Activated CD4-positive, alpha-beta T cell treated with anti-CD3 and anti-CD28 coated beads for 36 hours (primary cell): ENCODE measurements at regions of chr9 and their contacts with region 1.

Region 1: DNA sequence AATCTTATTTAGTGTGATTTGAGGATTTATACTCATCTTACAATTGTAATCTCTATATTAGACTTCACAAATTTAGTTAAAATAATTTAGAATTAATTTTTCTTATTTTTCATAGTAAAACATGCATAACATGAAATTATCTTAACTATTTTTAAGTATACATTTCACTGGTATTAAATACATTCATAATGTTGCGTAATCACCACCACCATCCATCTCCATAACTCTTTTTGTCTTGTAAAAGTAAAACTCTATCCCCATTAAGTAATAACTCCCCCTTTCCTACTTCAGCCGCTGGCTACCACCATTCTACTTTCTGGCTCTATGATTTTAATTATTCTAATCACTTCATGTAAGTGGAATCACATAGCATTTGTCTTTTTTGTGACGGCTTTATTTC is 193.4 kb downstream of the SH3GL2 start:
- DNase-seq: no peak
- ATAC-seq: no peak
- H3K4me3 Mint-ChIP-seq: no peak overlapping the region
- H3K27ac Mint-ChIP-seq: no peak overlapping the region
- H3K4me1 Mint-ChIP-seq: no peaks in the 10 kb centered on the region
- H3K27me3 Mint-ChIP-seq: no peaks in the 10 kb centered on the region

Region 2: GRCh38 chr9:17695482-17695881 is 76.7 kb before region 1 on chr9:
- CTCF ChIA-PET with region 1: no interaction called
- POLR2A ChIA-PET with region 1: no interaction called
- intact Hi-C with region 1: no loop called
- DNase-seq: no peak
- ATAC-seq: no peak
- H3K4me3 Mint-ChIP-seq: no peak overlapping the region
- H3K27ac Mint-ChIP-seq: no peak overlapping the region
- H3K4me1 Mint-ChIP-seq: no peaks in the 10 kb centered on the region
- H3K27me3 Mint-ChIP-seq: no peaks in the 10 kb centered on the region

Region 3: DNA sequence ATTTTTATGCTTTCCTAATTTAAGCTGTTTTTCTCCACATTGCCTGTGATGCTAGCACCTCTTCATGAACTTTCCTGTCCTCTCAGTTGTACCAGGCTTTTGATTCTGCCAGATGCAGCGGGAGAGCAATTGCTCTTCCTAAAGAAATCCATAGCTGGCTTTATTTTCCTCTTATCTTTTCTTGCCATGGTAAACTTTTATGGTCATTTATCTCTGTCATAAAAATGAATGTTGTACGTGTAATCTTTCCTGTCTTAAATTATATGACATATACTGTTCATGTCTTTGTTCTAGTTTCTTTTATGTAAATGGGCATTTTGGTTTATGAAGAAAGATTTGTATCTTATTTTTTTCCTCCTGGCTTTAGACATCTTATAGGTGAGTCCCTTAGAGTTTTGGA is 65.9 kb before region 1 on chr9:
- CTCF ChIA-PET with region 1: no interaction called
- POLR2A ChIA-PET with region 1: no interaction called
- intact Hi-C with region 1: loop called in 1 of 2 experiments (anchors 2 kb)
- DNase-seq: no peak
- ATAC-seq: no peak
- H3K4me3 Mint-ChIP-seq: no peak overlapping the region
- H3K27ac Mint-ChIP-seq: no peak overlapping the region
- H3K4me1 Mint-ChIP-seq: no peaks in the 10 kb centered on the region
- H3K27me3 Mint-ChIP-seq: no peaks in the 10 kb centered on the region

Region 4: DNA sequence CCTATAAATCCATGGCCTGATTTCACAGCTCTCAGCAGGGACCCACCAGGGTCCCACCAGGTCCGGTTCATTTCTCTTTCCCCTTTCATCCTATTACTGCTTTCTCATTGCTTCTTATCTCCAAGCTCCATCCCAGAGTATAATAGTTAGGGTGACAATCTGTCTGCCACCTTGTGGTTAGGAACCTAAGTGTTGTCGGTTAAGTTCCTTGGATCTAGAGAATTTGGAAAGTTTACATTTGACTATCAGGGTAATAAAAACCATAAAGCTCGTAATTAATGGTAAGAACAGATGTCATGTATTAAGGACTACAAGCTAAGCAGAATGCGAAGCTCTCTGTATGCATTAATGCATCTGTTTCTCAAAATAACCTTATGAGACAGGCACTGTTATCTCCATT is 65.7 kb after region 1 on chr9:
- CTCF ChIA-PET with region 1: no interaction called
- POLR2A ChIA-PET with region 1: no interaction called
- intact Hi-C with region 1: no loop called
- DNase-seq: no peak
- ATAC-seq: no peak
- H3K4me3 Mint-ChIP-seq: no peak overlapping the region
- H3K27ac Mint-ChIP-seq: no peak overlapping the region
- H3K4me1 Mint-ChIP-seq: no peaks in the 10 kb centered on the region
- H3K27me3 Mint-ChIP-seq: no peaks in the 10 kb centered on the region

Region 5: DNA sequence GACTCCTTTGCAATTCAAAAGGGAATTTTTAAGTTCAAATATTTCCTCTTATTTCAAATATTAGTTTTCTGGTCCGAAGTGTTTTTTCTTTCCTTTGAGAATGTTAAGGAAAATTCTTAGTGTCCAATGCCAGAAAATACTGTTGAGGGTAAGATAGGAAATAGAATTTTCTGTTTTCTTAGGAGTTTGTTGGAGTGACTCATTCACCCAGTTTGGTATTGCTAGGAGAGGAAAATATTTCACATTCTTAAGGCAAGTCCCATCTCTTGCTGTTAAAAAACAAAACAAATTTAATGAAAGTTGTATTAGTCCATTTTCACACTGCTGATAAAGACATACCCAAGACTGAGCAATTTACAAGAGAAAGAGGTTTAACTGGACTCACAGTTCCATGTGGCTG is 352.5 kb after region 1 on chr9:
- CTCF ChIA-PET with region 1: no interaction called
- POLR2A ChIA-PET with region 1: no interaction called
- intact Hi-C with region 1: no loop called
- DNase-seq: no peak
- ATAC-seq: no peak
- H3K4me3 Mint-ChIP-seq: no peak overlapping the region
- H3K27ac Mint-ChIP-seq: no peak overlapping the region
- H3K4me1 Mint-ChIP-seq: no peaks in the 10 kb centered on the region
- H3K27me3 Mint-ChIP-seq: no peaks in the 10 kb centered on the region